Heart left ventricle (tissue), 16 donors: ENCODE measurements at regions of chrX and their contacts with region 1.

Region 1: GRCh38 chrX:115449742-115450141 is 111.2 kb upstream of the PLS3 start:
- DNase-seq: peak; percentile 48 to 72 (median 57)
- ATAC-seq: peak in 2 of 4 donors; percentile 47 to 66
- H3K4me3 ChIP-seq: no peak overlapping the region
- H3K27ac ChIP-seq: peak overlapping the region in 2 of 12 donors; percentile 8 to 14
- H3K4me1 ChIP-seq: peaks cover 0 to 14% (median 4%) of the 10 kb centered on the region in 12 donors
- H3K27me3 ChIP-seq: peaks cover 0 to 16% (median 0%) of the 10 kb centered on the region in 9 donors
- CTCF ChIP-seq: no peak
- POLR2A ChIP-seq: no peak

Region 2: GRCh38 chrX:115344885-115345614 is 104.7 kb before region 1 on chrX:
- intact Hi-C with region 1: loop called in 2 of 10 experiments (anchors 10 kb)
- DNase-seq: peak; percentile 80 to 88 (median 85)
- ATAC-seq: peak; percentile 95 to 97 (median 96)
- H3K4me3 ChIP-seq: no peak overlapping the region
- H3K27ac ChIP-seq: peak overlapping the region in 11 of 12 donors; percentile 16 to 77 (median 66)
- H3K4me1 ChIP-seq: peaks cover 0 to 19% (median 7%) of the 10 kb centered on the region in 12 donors
- H3K27me3 ChIP-seq: peaks cover 0 to 10% (median 0%) of the 10 kb centered on the region in 9 donors
- CTCF ChIP-seq: no peak
- POLR2A ChIP-seq: no peak

Region 3: GRCh38 chrX:115642895-115643530 is 193.3 kb after region 1 on chrX:
- intact Hi-C with region 1: loop called in 2 of 10 experiments (anchors 10 kb)
- DNase-seq: peak in 1 of 5 donors; percentile 15
- ATAC-seq: no peak
- H3K4me3 ChIP-seq: no peak overlapping the region
- H3K27ac ChIP-seq: peak overlapping the region in 9 of 12 donors; percentile 2 to 59 (median 46)
- H3K4me1 ChIP-seq: peaks cover 0 to 12% (median 2%) of the 10 kb centered on the region in 12 donors
- H3K27me3 ChIP-seq: peaks cover 0 to 18% (median 0%) of the 10 kb centered on the region in 9 donors
- CTCF ChIP-seq: peak; percentile 80 to 99 (median 88)
- POLR2A ChIP-seq: no peak